Upper lobe of right lung (tissue), 1 donor: ENCODE measurements at regions of chr12 and their contacts with region 1.

Region 1: GRCh38 chr12:57268264-57268663 is 17.3 kb upstream of the STAC3 start:
- DNase-seq: no peak
- ATAC-seq: peak; percentile 41
- H3K4me3 ChIP-seq: no peak overlapping the region
- H3K27ac ChIP-seq: no peak overlapping the region
- H3K4me1 ChIP-seq: no peaks in the 10 kb centered on the region
- H3K27me3 ChIP-seq: no peaks in the 10 kb centered on the region
- CTCF ChIP-seq: no peak

Region 2: GRCh38 chr12:57459055-57459749 is 190.9 kb after region 1 on chr12:
- intact Hi-C with region 1: loop called (anchors 10 kb)
- DNase-seq: peak; percentile 96
- ATAC-seq: peak; percentile 90
- H3K4me3 ChIP-seq: peak overlapping the region; percentile 79
- H3K27ac ChIP-seq: peak overlapping the region; percentile 84
- H3K4me1 ChIP-seq: peaks cover 32% of the 10 kb centered on the region
- H3K27me3 ChIP-seq: peaks cover 6% of the 10 kb centered on the region
- CTCF ChIP-seq: peak; percentile 96